AG04449 (cell line): ENCODE measurements at regions of chr2 and their contacts with region 1.

Region 1: DNA sequence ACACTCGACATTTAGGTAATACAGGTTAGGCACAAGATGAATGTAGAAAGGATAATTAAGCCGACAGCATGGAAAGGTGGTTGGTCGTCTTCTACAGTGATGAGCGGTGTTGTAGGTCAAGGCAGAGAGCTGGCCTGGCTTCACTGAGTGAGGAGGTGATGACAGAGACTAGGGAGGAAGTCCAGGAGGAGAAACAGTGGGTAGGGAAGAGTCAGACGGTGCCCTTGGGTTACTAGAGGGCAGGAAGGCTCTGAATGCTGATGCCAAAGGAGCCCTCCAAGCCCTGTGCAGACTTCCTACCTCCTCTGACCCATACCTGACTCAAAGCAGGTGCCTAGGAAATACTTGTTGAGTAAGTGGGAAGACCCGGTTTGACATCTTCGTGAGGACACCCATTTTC is 100.8 kb downstream of the ITGB1BP1 start:
- DNase-seq: no peak
- H3K4me3 ChIP-seq: no peak overlapping the region
- CTCF ChIP-seq: no peak

Region 2: DNA sequence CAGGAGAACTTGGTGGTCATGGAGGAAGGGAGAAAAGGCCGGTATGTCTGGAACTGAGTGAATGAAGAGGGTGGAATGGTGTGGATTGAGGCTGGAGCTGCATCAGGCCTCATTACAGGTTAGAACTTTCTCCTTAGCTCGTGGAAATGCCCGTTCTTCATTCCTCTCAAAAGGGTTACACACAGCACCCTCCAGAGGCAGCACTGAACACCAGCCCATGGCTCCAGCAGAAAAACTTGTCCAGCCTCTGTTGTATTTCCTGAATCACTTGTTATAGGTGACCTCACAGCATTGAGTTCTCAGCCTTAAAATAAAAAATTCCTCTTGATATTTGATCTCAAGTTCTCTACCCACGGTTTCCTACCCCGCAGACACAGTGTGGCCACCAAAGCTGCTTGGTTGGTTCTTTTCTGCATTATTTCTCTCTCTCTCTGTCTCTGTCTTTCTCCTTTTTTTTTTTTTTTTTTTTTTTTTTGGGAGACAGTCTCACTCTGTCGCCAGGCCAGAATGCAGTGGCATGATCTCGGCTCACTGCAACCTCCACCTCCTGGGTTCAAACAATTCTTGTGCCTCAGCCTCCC is 11.1 kb after region 1 on chr2:
- CTCF ChIA-PET with region 1: interaction called, 15 read pairs
- POLR2A ChIA-PET with region 1: no interaction called
- DNase-seq: peak; percentile 46
- H3K4me3 ChIP-seq: no peak overlapping the region
- CTCF ChIP-seq: peak; percentile 79